ENCODE measurements at regions of chr10 and their contacts with region 1.

Region 1: DNA sequence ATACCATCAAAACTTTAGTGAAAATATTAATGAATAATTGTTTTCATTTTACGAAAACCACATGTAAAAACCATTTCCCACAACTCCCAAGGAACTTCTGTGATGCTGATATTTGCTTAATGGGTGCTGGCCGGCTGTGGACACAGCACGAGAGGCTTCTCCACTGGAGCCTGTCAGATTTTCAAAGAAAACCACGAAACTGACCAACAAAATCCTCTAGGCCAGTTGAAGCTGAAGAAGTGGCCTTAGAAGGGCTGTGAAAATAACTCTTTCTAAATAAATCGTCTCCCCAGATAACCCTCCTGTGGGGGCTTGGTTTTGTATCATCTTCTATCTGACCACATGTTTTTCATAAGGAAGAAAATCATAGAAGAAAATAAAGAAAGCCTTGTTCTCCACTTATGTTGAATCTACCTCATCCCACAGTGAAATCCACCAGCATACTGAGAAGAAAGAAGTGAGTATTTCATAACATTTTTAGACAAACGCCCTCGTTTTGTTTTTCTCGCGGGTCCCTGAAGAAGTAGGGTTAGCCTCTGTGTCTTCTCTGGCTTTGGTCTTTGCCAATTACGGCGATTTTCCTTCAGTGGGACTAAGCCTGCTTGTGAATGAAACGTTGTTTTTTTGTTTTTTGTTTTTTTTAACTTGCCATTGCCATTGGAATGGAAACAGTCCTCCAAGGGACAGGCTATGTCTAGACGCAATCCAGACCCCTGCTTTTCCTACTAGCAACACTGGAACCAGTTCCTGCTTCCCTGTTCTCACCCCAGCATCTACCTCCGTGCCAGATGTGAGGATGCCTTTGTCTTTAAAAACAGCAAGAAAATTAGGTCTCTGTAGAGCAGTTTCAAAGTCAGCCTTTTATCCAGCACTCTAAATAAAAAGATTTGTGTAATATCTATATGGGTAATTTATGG is 123.9 kb downstream of the ADAM12 start:
- DNase-seq: no peak

Region 2: GRCh38 chr10:124530215-124530665 is 1734.1 kb before region 1 on chr10:
- intact Hi-C with region 1: loop called in 1 of 2 experiments (anchors 5 kb)
- DNase-seq: peak; percentile 95

Region 3: DNA sequence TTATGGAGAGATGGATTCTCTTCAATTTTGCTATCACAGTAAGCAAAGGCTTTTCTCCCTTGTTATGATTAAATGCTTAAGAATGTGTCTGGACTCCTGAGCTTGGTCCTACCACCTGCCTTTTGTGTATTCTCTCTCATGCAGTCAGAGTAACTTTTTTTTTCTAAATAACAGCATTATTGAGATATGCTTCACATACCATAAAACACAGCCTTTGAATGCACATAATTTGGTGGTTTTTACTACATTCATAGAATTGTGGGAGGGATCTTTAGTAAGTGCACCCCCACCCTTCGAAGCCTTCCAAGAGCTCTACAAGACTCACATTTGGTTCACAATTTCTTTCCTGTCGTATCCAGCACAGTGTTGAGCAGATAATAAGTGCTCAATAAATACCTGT is 51.6 kb before region 1 on chr10:
- intact Hi-C with region 1: no loop called
- DNase-seq: no peak

Region 4: DNA sequence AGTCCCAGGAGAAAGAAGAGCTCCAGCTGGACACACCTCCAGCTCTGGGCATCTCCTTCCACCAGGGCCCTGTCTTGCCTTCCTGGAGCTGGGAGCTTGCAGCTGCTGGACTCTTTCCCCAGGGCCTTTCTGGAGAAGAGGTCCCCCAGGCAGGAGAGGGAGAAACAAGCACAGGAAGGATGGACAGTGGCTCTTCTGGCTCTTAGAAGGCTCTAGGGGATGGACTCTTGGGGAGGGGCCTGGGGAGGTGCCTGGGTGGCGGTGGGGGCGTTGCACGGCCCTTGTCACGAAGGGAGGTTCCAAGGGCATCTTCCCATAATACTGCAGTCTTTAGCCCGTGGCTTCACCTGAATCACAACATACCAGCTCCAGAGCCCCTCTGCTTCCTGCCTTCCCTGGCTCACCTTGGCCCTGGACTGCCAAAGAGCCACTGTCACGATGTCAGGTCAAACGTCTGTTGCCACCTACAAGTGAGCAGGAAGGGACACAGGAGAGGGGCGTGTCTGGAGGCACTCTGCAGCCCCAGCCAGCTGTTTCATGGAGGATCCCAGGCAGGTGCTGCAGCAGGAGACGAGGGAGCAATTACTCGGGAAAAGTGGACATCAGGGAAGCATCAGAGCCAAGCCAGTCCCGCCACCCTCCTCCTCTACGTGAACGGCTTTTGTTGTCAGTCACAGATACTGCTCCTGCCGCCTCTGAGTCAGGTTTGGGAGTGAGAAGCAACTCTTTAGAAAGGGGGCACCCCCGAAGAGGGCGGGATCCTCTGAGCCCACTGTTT is 39.9 kb before region 1 on chr10:
- intact Hi-C with region 1: loop called in 1 of 2 experiments (anchors 1 kb)
- DNase-seq: no peak

Region 5: DNA sequence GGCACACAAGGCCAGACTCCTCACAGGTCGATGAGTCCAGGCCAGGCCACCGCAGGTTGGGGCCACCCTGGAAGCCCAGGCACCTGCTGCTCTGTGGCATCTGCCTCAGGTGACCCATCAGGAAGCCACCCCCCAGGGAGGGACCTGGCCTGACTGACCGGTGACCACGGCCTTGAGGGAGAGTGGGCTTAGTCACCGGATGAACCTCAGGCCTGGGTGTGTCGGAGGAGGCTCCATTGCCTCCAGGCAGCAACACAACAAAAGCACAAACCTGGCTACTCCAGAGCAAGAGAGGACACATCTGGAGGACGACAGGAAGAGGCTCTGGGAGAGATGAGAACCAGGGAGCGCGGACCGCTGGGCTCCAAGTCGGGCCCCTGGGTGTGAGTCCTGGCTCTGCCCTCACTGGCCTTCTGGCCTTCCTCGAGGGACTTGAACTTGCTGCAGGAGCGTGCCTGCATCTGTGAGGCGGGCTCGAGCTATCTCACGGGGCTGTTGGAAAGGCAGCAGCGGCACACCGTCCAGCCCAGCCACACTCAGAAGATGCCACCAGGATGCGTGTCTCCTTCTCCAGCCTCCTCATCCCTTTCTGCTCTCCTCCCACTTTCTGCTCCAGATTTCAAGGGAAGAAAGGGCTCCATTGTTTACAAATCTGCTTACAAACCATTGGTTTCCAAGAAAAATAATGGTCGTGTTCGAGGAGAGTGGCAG is 29.1 kb before region 1 on chr10:
- intact Hi-C with region 1: no loop called
- DNase-seq: no peak